CD8-positive, alpha-beta T cell (primary cell): ENCODE measurements at regions of chr5 and their contacts with region 1.

Region 1: DNA sequence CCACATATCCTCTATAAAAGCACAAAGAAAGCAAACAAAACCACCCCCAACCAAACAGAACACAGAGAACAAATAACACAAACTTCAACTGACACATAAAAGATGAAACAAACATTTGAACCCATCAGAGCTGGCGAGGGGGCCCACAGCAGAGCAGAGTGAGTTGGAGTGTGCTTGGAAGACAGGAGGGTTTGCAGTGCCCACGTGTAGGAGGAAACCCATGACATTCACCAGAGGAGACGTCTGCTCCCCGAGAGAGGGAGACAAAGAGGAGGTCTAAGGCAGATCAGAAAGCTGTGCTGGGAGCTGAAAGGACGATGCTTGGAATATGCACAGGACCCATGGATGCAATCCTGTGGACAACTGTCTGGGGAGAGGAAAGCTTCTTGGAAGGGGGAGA is 27.0 kb downstream of the MRPL36 start:
- DNase-seq: peak in 4 of 9 experiments; percentile 26 to 54 (median 36)
- ATAC-seq: peak; percentile 49
- H3K4me3 ChIP-seq: no peak overlapping the region
- H3K4me3 Mint-ChIP-seq: no peak overlapping the region
- H3K27ac ChIP-seq: no peak overlapping the region
- H3K27ac Mint-ChIP-seq: no peak overlapping the region
- H3K4me1 ChIP-seq: peaks cover 3% of the 10 kb centered on the region
- H3K4me1 Mint-ChIP-seq: peaks cover 4% of the 10 kb centered on the region
- H3K27me3 ChIP-seq: no peaks in the 10 kb centered on the region
- H3K27me3 Mint-ChIP-seq: no peaks in the 10 kb centered on the region
- CTCF ChIP-seq: no peak

Region 2: DNA sequence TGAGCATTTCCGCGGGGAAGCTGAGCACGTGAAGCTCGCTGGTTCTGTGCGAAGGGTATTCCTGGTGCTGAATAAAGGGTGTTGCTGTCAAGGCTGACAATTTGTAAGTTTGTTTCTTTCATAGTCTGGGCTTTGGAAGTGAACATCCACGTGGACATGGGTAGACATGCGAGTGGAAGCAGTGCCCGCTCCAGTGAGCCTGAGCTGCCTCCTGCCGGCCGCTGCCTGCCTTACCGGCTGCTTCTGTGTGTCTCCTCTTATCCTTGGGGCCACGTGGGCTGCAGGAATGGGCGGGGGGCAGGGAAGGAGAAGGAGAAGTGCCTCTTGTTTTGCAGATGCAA is 43.3 kb after region 1 on chr5:
- CTCF ChIA-PET with region 1: no interaction called
- POLR2A ChIA-PET with region 1: no interaction called
- intact Hi-C with region 1: loop called in 1 of 2 experiments (anchors 5 kb)
- DNase-seq: no peak
- ATAC-seq: no peak
- H3K4me3 ChIP-seq: no peak overlapping the region
- H3K4me3 Mint-ChIP-seq: no peak overlapping the region
- H3K27ac ChIP-seq: no peak overlapping the region
- H3K27ac Mint-ChIP-seq: no peak overlapping the region
- H3K4me1 ChIP-seq: no peaks in the 10 kb centered on the region
- H3K4me1 Mint-ChIP-seq: peaks cover 5% of the 10 kb centered on the region
- H3K27me3 ChIP-seq: no peaks in the 10 kb centered on the region
- H3K27me3 Mint-ChIP-seq: no peaks in the 10 kb centered on the region
- CTCF ChIP-seq: no peak